ENCODE measurements at regions of chr11 and their contacts with region 1.

Region 1: GRCh38 chr11:124970925-124971324 is 16.9 kb downstream of the CCDC15 start:
- DNase-seq: peak; percentile 17
- H3K4me3 Mint-ChIP-seq: no peak overlapping the region
- H3K27ac Mint-ChIP-seq: no peak overlapping the region
- H3K4me1 Mint-ChIP-seq: no peaks in the 10 kb centered on the region
- H3K27me3 Mint-ChIP-seq: no peaks in the 10 kb centered on the region
- CTCF ChIP-seq: no peak

Region 2: DNA sequence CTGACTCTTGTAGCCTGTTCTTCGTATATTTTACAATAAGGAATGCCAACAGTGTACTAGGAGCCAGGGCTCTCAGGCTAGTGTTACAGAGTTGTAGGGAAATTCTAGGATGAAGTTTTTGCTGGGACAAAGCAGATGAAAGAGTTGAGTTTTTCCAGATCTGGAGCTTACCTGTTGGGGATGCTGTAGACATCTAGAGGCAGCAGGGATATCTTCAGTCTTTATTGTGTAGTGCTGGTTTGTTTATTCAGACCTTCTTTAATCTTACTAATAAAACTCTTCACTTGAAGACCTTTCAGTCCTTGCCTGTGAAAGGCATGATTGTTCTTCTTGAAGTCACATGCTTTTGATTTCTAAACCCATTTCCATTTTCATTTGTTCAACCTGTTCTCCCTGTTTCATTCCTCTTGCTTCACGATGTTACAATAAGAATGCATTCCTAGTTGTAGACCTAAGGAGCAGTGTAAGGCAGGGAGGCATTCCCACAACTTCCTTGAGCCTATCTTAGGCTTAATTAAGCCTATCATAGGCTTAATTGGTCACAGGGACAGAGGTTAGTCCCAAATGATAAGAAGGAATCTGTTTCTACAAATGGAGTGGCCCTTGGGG is 84.3 kb after region 1 on chr11:
- CTCF ChIA-PET with region 1: no interaction called
- intact Hi-C with region 1: loop called (anchors 5 kb)
- DNase-seq: no peak
- H3K4me3 Mint-ChIP-seq: no peak overlapping the region
- H3K27ac Mint-ChIP-seq: peak overlapping the region; percentile 70
- H3K4me1 Mint-ChIP-seq: peaks cover 36% of the 10 kb centered on the region
- H3K27me3 Mint-ChIP-seq: no peaks in the 10 kb centered on the region
- CTCF ChIP-seq: no peak

Region 3: DNA sequence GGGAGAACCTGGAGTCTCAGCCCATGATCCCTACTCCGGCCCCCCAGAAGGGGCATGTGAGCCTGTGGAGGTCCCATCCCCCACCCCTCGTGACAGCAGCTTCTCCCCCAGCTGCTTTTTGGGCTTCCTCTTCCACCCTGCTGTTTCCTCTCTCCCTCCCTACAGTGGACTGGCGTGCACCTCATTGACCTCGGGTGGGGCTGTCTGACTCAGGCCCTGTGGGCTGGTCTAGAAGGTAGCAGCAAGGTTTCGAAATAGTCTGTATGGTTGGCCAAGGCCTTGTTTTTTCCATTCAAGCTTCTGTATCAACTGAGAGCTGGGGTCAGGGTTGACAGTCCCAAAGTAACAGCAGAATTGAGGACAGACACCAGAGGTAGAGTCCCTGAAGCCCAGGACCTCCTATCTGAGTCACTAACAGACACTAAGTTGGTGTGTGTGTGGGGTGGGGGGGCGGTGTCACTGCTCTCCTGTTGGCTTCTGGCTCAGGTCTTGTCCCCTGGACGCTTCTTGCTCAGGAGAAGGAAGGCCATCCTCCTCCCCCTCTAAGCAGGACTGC is 99.9 kb after region 1 on chr11:
- CTCF ChIA-PET with region 1: no interaction called
- intact Hi-C with region 1: no loop called
- DNase-seq: peak; percentile 47
- H3K4me3 Mint-ChIP-seq: no peak overlapping the region
- H3K27ac Mint-ChIP-seq: peak overlapping the region; percentile 66
- H3K4me1 Mint-ChIP-seq: peaks cover 26% of the 10 kb centered on the region
- H3K27me3 Mint-ChIP-seq: no peaks in the 10 kb centered on the region
- CTCF ChIP-seq: no peak